ENCODE measurements at regions of chr4 and their contacts with region 1.

Region 1: DNA sequence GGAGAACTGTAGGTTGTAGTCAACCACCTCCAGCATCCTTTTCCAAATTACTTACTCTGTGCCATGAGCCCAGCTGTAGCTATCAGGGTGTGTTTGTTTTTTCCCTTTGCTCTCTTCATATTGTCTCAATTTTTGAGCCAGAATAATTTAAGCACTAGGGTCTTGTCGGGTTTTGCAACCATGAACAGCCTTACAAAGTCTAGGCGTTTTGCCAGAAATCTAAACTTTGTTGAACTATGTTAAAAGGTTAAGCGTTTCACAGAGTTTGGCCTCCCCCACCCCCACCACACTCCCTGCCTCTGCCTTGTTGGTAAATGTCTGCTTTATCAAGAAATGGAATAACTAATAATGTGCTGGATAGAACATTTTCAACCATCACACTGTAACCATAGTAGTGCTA is 190.6 kb upstream of the TTC29 start:
- DNase-seq: no peak
- H3K4me3 ChIP-seq: no peak overlapping the region
- H3K27ac ChIP-seq: no peak overlapping the region
- H3K4me1 ChIP-seq: no peaks in the 10 kb centered on the region
- H3K27me3 ChIP-seq: no peaks in the 10 kb centered on the region
- CTCF ChIP-seq: no peak

Region 2: DNA sequence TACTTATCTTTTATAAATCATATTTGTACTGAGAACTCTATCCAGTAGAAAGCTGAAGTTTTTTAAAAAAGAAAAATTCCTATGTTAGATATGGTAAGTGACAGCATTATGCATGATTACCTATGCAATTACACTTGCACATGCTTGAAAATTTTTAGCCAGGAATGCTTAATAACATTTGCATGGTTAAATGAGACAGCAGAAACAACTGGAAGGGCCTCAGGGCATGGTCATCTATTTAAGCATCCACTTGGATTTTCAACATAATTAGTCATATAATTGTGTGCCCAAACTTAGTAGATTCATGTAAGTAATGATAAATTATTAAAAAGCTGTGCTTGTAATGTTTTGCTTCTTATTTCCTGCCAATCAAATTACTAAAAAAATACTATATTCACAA is 342.6 kb before region 1 on chr4:
- CTCF ChIA-PET with region 1: no interaction called
- dilution Hi-C with region 1: no loop called
- in situ Hi-C with region 1: no loop called
- intact Hi-C with region 1: no loop called
- DNase-seq: no peak
- H3K4me3 ChIP-seq: no peak overlapping the region
- H3K27ac ChIP-seq: no peak overlapping the region
- H3K4me1 ChIP-seq: peaks cover 5% of the 10 kb centered on the region
- H3K27me3 ChIP-seq: no peaks in the 10 kb centered on the region
- CTCF ChIP-seq: no peak

Region 3: GRCh38 chr4:147207911-147208310 is 71.6 kb after region 1 on chr4:
- CTCF ChIA-PET with region 1: no interaction called
- dilution Hi-C with region 1: loop called (anchors 5 kb)
- in situ Hi-C with region 1: no loop called
- intact Hi-C with region 1: no loop called
- DNase-seq: no peak
- H3K4me3 ChIP-seq: no peak overlapping the region
- H3K27ac ChIP-seq: no peak overlapping the region
- H3K4me1 ChIP-seq: no peaks in the 10 kb centered on the region
- H3K27me3 ChIP-seq: no peaks in the 10 kb centered on the region
- CTCF ChIP-seq: no peak